Natural killer cell (primary cell): ENCODE measurements at regions of chrX and their contacts with region 1.

Region 1: GRCh38 chrX:49073601-49074571 is at the start of gene PRAF2:
- DNase-seq: peak; percentile 69 to 94
- ATAC-seq: peak; percentile 91 to 96 (median 93)
- H3K4me3 ChIP-seq: peak within 1 kb of the TSS; percentile 47
- H3K4me3 Mint-ChIP-seq: peak within 1 kb of the TSS; percentile 89
- H3K27ac ChIP-seq: peak within 1 kb of the TSS; percentile 72
- H3K27ac Mint-ChIP-seq: peak within 1 kb of the TSS; percentile 88 to 93
- H3K4me1 ChIP-seq: peaks cover 23% of the 10 kb centered on the region
- H3K4me1 Mint-ChIP-seq: peaks cover 16 to 19% of the 10 kb centered on the region in 2 donors
- H3K27me3 ChIP-seq: no peaks in the 10 kb centered on the region
- H3K27me3 Mint-ChIP-seq: no peaks in the 10 kb centered on the region
- CTCF ChIP-seq: no peak
- total RNA-seq, gene PRAF2: 18.1 to 24.8 (median 19.9) TPM

Region 2: GRCh38 chrX:49100704-49101628 is 27.1 kb after region 1 on chrX:
- intact Hi-C with region 1: loop called (anchors 2 kb)
- DNase-seq: peak; percentile 83 to 94
- ATAC-seq: peak; percentile 93 to 98 (median 95)
- H3K4me3 ChIP-seq: peak overlapping the region; percentile 75
- H3K4me3 Mint-ChIP-seq: peak overlapping the region; percentile 88
- H3K27ac ChIP-seq: peak overlapping the region; percentile 85
- H3K27ac Mint-ChIP-seq: peak overlapping the region; percentile 82 to 88
- H3K4me1 ChIP-seq: peaks cover 17% of the 10 kb centered on the region
- H3K4me1 Mint-ChIP-seq: peaks cover 0 to 9% of the 10 kb centered on the region in 2 donors
- H3K27me3 ChIP-seq: no peaks in the 10 kb centered on the region
- H3K27me3 Mint-ChIP-seq: no peaks in the 10 kb centered on the region
- CTCF ChIP-seq: no peak